ENCODE measurements at regions of chr17 and their contacts with region 1.

Region 1: DNA sequence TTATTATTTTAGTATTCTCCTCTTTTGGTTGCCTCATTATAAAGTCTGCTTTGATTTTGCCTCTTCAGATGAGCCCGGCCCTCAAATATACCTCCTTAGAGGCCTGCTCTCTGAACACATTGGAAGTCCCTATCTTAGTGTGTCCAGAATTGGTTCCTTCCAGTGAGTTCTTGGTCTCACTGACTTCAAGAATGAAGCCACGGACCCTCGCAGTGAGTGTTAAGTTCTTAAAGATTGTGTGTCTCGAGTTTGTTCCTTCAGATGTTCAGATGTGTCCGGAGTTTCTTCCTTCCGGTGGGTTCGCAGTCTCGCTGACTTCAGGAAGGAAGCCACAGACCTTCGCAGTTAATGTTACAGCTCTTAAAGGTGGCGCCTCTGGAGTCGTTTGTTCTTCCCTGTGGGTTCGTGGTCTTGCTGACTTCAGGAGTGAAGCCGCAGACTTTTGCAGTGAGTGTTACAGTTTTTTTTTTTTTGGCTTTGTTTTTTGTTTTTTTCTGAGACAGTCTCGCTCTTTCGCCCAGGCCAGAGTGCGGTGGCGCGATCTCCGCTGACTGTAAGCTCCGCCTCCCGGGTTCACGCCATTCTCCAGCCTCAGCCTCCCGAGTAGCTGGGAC is 45.8 kb upstream of the NOS2 start:
- DNase-seq: no peak
- ATAC-seq: no peak
- H3K4me3 ChIP-seq: no peak overlapping the region
- H3K27ac ChIP-seq: no peak overlapping the region
- H3K4me1 ChIP-seq: no peaks in the 10 kb centered on the region
- H3K27me3 ChIP-seq: peaks cover 8% of the 10 kb centered on the region
- CTCF ChIP-seq: no peak

Region 2: GRCh38 chr17:27793168-27793905 is 52.8 kb before region 1 on chr17:
- CTCF ChIA-PET with region 1: no interaction called
- POLR2A ChIA-PET with region 1: no interaction called
- in situ Hi-C with region 1: no loop called
- intact Hi-C with region 1: loop called (anchors 10 kb)
- DNase-seq: no peak
- ATAC-seq: peak; percentile 67
- H3K4me3 ChIP-seq: peak overlapping the region; percentile 32 to 42
- H3K27ac ChIP-seq: no peak overlapping the region
- H3K4me1 ChIP-seq: peaks cover 4% of the 10 kb centered on the region; the same call in 1 of the 2 replicates
- H3K27me3 ChIP-seq: peaks cover 19% of the 10 kb centered on the region
- CTCF ChIP-seq: no peak

Region 3: GRCh38 chr17:28335201-28335955 is 489.2 kb after region 1 on chr17 and contains the starts of genes IFT20 and TNFAIP1:
- CTCF ChIA-PET with region 1: no interaction called
- POLR2A ChIA-PET with region 1: no interaction called
- in situ Hi-C with region 1: no loop called
- intact Hi-C with region 1: no loop called
- DNase-seq: peak; percentile 94
- ATAC-seq: peak; percentile 98
- H3K4me3 ChIP-seq: peak within 1 kb of the TSS; percentile 87 to 95
- H3K27ac ChIP-seq: peak within 1 kb of the TSS; percentile 94
- H3K4me1 ChIP-seq: peaks cover 27% of the 10 kb centered on the region
- H3K27me3 ChIP-seq: no peaks in the 10 kb centered on the region
- CTCF ChIP-seq: no peak
- total RNA-seq, gene IFT20: 25.4 TPM
- total RNA-seq, gene TNFAIP1: 55.8 TPM

Measured in Panc1 (cell line).